ENCODE measurements at regions of chr9 and their contacts with region 1.

Region 1: DNA sequence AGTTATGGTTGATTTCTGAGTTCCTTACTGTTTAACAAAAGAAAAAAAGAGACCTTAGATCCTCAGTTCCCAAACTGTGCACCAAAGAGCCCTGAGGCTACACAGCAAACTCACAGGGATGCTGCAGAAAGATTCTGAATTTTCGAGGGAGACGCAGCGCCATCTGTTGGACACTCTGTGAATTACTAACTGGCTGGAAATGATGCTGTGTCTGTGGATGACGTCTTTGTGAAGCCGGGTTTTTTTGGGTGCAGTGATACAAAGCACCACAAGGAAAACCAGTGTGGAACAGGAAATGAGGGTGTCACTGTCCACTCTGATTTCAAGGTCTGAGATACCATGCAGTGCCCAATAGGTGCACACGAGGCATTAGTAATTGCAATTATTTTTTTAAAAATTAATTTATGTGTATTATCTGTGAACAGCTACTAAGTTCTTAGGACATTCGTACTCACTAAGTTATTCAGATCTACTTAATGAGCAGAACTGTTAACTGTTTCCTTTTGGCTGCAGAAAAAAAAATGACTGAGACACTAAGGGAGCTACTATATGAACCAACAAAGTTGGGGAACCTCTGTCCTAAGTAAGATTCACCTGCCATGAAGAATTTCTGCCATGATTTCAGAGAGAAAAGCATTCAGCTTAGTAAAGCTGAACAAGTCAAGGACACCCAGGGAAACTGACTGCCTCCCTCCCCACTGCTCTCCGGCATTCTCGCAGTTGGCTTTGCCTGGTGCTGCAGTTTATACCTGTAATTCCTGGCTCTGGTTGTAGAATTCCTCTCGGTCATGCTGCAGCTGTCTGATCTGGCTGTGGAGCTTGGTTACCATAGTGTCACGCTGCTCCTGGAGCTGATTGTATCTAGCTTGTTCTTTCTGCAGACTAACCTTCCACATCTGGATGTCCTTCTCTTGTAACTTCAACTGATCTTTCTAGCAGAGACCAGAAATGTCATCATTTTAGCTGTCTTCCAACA is 23.4 kb downstream of the SPACA9 start:
- H3K4me3 ChIP-seq: no peak overlapping the region
- H3K27ac ChIP-seq: no peak overlapping the region
- H3K4me1 ChIP-seq: no peaks in the 10 kb centered on the region
- CTCF ChIP-seq: peak; percentile 88

Region 2: GRCh38 chr9:132877824-132878694 is 24.1 kb before region 1 on chr9 and contains the start of gene AK8:
- CTCF ChIA-PET with region 1: interaction called, 39 read pairs
- POLR2A ChIA-PET with region 1: no interaction called
- H3K4me3 ChIP-seq: peak within 1 kb of the TSS; percentile 73
- H3K27ac ChIP-seq: peak within 1 kb of the TSS; percentile 10; the same call in 1 of the 2 replicates
- H3K4me1 ChIP-seq: no peaks in the 10 kb centered on the region
- CTCF ChIP-seq: no peak

Region 3: DNA sequence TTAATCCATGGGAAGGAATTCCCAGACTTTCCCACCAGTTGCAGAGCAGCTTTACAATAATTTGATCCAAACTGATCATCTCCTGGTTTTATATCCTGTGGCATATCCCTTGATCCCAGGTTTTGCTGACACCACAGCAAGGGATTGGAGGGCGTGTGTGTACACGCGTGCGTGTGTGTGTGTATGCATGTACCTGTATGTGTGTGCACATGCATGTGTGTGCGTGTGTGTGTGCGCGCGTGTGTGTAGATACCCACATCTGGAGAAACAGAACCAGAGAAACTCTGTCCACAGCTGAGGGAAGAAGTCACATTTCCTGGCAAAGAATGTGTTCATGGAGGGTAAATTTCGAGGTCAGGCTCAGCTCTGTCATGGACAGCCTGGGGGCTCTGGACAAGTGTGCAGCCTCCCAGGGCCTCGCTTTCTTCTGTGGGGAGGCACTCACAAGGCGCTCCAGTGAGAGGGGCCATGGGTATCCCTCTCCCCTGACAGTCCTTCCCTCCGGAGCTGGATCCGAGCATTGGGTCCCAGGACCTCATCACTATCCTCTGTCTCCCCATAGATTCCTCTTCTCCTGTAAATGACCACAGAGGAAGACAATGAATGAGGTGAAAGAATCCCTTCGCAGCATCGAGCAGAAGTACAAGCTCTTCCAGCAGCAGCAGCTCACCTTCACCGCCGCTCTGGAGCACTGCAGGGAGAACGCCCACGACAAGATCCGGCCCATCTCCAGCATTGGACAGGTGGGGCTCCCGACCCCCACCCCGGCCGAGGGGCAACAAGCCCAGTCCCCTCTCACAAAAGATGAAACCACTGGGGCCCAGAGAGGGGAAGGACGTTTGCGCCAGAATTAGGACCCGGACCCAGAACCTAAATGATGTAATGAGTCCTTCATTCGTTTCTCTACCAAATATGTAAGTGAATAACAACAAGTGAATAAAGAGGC is 18.5 kb before region 1 on chr9:
- CTCF ChIA-PET with region 1: interaction called, 39 read pairs
- POLR2A ChIA-PET with region 1: no interaction called
- H3K4me3 ChIP-seq: no peak overlapping the region
- H3K27ac ChIP-seq: no peak overlapping the region
- H3K4me1 ChIP-seq: no peaks in the 10 kb centered on the region
- CTCF ChIP-seq: no peak

Region 4: GRCh38 chr9:132931178-132931735 is 29.1 kb after region 1 on chr9:
- CTCF ChIA-PET with region 1: interaction called, 27 read pairs
- POLR2A ChIA-PET with region 1: interaction called, 3 read pairs
- H3K4me3 ChIP-seq: no peak overlapping the region
- H3K27ac ChIP-seq: no peak overlapping the region
- H3K4me1 ChIP-seq: no peaks in the 10 kb centered on the region
- CTCF ChIP-seq: no peak

Region 5: DNA sequence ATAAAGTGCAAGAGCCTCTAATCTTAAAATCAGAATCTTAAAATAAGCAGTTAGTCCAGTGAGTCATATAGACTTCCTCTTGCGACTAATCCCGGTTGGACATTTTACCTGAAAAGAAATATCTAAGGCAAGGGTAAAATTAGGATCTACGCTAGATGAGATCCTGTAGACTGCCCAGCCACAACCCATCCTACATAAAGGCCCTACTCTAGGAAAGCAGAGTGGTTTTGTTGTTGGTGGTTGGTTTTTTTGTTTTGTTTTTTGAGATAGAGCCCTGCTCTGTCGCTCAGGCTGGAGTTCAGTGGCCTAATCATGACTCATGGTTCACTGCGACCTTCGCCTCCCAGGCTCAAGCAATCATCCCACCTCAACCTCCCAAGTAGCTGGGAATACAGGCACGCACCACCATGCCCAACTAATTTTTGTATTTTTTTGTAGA is 35.3 kb after region 1 on chr9:
- CTCF ChIA-PET with region 1: interaction called, 19 read pairs
- POLR2A ChIA-PET with region 1: no interaction called
- H3K4me3 ChIP-seq: no peak overlapping the region
- H3K27ac ChIP-seq: no peak overlapping the region
- H3K4me1 ChIP-seq: peaks cover 10% of the 10 kb centered on the region; the same call in 1 of the 2 replicates
- CTCF ChIP-seq: no peak

Region 6: GRCh38 chr9:132944302-132945185 is 42.4 kb after region 1 on chr9 and contains the start of gene TSC1:
- CTCF ChIA-PET with region 1: interaction called, 13 read pairs
- POLR2A ChIA-PET with region 1: interaction called, 3 read pairs
- H3K4me3 ChIP-seq: peak within 1 kb of the TSS; percentile 97
- H3K27ac ChIP-seq: peak within 1 kb of the TSS; percentile 98
- H3K4me1 ChIP-seq: peaks cover 14% of the 10 kb centered on the region
- CTCF ChIP-seq: no peak

Region 7: DNA sequence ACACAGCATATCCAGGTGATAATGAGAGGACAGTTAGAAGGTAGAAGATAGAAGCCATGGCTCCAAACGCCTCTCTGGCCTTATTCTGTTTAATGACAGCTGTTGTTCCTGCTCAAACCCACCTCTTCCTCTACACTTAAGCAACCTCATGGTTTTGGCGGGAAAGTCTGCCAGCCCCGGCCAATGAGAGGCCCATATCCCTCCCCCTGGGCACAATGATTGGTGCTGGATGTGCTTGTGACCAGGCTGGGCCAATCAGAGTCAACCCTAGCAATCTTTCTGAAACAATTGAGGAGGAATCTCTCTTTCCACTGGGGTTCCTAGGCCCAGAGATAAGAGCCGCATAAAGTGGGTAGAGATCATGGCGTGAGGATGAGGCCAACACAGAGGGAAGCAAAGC is 71.6 kb after region 1 on chr9:
- CTCF ChIA-PET with region 1: interaction called, 39 read pairs
- POLR2A ChIA-PET with region 1: no interaction called
- H3K4me3 ChIP-seq: no peak overlapping the region
- H3K27ac ChIP-seq: no peak overlapping the region
- H3K4me1 ChIP-seq: no peaks in the 10 kb centered on the region
- CTCF ChIP-seq: no peak

Region 8: GRCh38 chr9:133054966-133055365 is 152.8 kb after region 1 on chr9:
- CTCF ChIA-PET with region 1: no interaction called
- POLR2A ChIA-PET with region 1: no interaction called
- H3K4me3 ChIP-seq: no peak overlapping the region
- H3K27ac ChIP-seq: no peak overlapping the region
- H3K4me1 ChIP-seq: peaks cover 4% of the 10 kb centered on the region; the same call in 1 of the 2 replicates
- CTCF ChIP-seq: no peak

Measured in HEK293 (cell line).